GM18951 (cell line): ENCODE measurements at regions of chr1 and their contacts with region 1.

Region 1: DNA sequence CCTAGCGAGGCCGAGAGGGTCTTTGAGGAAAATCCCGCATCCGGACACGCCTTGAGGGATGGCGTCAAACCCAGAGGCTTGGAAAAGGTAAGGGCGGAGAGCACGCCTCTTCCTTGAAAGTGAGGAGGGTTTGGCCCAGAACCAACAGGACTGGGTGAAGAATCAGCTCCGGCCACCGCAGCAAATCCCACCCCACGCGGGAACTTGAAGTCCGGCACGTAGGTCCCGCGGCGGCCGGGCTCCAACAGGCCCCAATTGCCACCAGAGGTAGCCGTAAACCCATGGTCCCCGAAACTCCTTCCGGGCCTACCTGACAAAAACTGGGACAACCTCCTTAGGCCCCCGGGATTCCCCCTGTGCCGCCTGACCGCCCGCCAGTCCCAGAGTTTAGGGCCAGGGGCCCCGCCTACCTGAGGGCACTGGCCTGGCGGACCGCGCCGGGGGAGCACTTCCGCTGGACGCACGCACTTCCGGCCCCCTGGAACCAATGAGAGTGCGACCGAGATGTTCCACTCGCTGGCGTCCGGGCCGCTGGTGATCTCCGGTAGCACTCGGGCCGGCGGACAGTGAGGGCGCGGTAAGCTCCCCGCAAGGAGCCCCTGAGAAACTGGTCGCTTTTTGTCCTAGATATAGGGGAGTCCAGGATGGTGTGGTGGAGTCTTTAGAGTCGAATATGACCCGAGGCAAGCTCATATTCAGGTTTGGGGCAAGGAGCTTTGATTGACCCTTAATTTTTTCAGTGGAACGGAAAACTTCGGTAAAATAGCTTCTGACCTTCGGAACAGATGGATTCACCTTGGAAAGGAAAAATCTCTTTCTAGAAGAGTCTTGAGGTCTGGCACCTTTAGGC is at the starts of genes LZIC and NMNAT1:
- POLR2A ChIP-seq: peak; percentile 94

Region 2: DNA sequence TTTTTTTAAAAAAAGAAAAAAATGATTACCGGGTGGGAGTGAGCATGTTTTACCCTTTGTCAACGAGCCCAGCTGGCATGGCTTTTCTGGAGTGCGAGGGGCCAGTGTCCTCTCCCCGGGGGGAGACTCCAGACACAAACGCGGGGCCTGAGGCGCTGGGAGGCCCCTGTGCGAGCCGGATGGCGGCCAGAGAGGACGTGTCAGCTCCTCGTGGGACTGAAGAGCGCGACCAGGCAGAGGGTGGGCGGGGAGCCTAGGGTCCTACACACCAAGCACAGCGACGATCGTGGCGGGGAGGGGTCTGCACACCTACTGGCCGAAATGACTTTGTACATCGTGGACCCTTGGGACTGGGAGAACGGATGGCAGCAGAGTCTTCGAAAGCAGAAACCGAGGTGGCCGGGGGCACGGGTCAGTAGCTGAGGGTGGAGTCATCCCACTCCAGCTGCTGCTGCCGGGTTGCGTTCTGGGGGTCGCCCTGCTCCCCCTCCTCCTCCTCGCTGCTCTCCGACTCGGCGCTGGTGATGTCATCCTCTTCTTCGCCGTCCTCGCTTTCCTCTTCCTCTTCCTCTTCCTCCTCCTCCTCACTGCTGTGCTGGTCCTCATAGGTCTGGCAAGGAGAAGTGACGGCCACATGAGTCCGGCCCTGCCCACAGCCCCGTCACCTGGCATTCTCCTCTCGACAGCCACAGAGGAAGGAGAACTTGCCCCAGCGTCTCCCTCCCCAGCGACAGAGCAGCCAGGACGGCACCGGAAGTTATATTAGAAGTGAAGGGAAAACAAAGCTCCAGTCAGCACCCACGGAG is 212.9 kb before region 1 on chr1:
- in situ Hi-C with region 1: no loop called
- POLR2A ChIP-seq: no peak

Region 3: DNA sequence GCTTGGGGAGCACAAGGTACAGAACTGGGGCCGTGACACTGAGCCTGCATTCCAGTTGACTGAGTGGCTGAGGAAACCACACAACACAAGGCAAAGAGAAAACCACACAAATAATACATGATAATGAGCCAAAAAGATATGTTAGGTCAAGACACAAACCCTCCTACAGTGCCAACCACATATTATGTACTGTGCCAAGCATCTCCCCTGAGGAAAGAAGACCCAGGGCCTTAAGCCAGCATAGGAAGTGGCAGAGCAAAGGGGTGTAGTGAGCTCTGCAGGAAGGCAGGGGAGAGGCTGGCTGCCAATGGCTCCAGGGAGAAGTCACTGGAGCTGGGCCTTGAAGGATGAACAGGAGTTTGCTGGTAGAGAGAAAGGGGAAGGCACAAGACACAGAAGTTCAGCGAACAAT is 61.3 kb before region 1 on chr1:
- in situ Hi-C with region 1: loop called (anchors 10 kb)
- POLR2A ChIP-seq: no peak